ENCODE measurements at regions of chr15 and their contacts with region 1.

Region 1: GRCh38 chr15:47364230-47365141 is 352.8 kb upstream of the SEMA6D start:
- DNase-seq: no peak
- ATAC-seq: no peak
- H3K4me3 ChIP-seq: no peak overlapping the region
- H3K27ac ChIP-seq: no peak overlapping the region
- H3K4me1 ChIP-seq: peaks cover 0 to 4% of the 10 kb centered on the region in 2 donors
- H3K27me3 ChIP-seq: no peaks in the 10 kb centered on the region
- CTCF ChIP-seq: no peak
- POLR2A ChIP-seq: no peak

Region 2: GRCh38 chr15:47301481-47301880 is 63.0 kb before region 1 on chr15:
- in situ Hi-C with region 1: no loop called
- intact Hi-C with region 1: loop called (anchors 1 kb)
- DNase-seq: peak; percentile 57 to 78
- ATAC-seq: peak; percentile 99 to 100
- H3K4me3 ChIP-seq: no peak overlapping the region
- H3K27ac ChIP-seq: peak overlapping the region; percentile 50 to 57 (median 54)
- H3K4me1 ChIP-seq: peaks cover 14 to 15% of the 10 kb centered on the region in 2 donors
- H3K27me3 ChIP-seq: no peaks in the 10 kb centered on the region
- CTCF ChIP-seq: no peak
- POLR2A ChIP-seq: no peak

Region 3: DNA sequence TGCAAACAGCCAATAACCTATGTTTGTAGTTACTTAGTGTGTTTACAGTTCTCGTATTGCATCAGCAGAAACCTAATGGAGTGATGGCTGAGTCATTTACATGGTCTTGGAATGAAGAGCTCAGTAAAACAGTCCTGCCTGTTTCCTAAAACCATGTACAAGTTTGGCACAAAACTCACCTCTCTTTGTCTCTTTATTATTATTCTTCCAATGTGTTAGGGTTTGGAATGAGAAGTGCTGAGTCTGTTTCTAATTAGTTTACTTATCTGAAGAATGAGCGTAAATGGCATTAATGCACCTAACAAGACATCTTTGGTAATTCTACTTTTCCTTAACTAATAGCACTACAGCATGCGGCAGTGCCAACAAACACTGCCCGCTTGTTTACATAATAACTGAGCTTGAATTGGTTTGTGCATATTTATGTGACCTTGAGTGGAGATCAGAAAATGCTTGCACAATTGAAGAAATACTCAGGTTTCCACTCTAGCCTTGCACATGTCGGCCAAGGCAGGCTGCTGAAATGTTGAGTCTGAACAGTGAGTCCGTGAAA is 32.6 kb before region 1 on chr15:
- in situ Hi-C with region 1: no loop called
- intact Hi-C with region 1: loop called (anchors 5 kb)
- DNase-seq: peak; percentile 2 to 19
- ATAC-seq: peak; percentile 85 to 92
- H3K4me3 ChIP-seq: no peak overlapping the region
- H3K27ac ChIP-seq: peak overlapping the region; percentile 34 to 68 (median 56)
- H3K4me1 ChIP-seq: peaks cover 14 to 19% of the 10 kb centered on the region in 2 donors
- H3K27me3 ChIP-seq: no peaks in the 10 kb centered on the region
- CTCF ChIP-seq: no peak
- POLR2A ChIP-seq: no peak

Measured in gastrocnemius medialis (tissue), 4 donors.